Activated CD4-positive, alpha-beta T cell treated with anti-CD3 and anti-CD28 coated beads, Interleukin-2, amount 10 ng/mL, durations not matched to agents 7 days and 5 days (primary cell): ENCODE measurements at regions of chr14 and their contacts with region 1.

Region 1: GRCh38 chr14:64447876-64448670 is 17.2 kb upstream of the AKAP5 start:
- DNase-seq: no peak
- H3K4me3 Mint-ChIP-seq: no peak overlapping the region
- H3K27ac Mint-ChIP-seq: no peak overlapping the region
- H3K4me1 Mint-ChIP-seq: peaks cover 26% of the 10 kb centered on the region
- H3K27me3 Mint-ChIP-seq: no peaks in the 10 kb centered on the region

Region 2: GRCh38 chr14:64434528-64434927 is 13.5 kb before region 1 on chr14:
- CTCF ChIA-PET with region 1: interaction called, 14 read pairs
- POLR2A ChIA-PET with region 1: no interaction called
- DNase-seq: no peak
- H3K4me3 Mint-ChIP-seq: no peak overlapping the region
- H3K27ac Mint-ChIP-seq: no peak overlapping the region
- H3K4me1 Mint-ChIP-seq: peaks cover 19% of the 10 kb centered on the region
- H3K27me3 Mint-ChIP-seq: no peaks in the 10 kb centered on the region

Region 3: DNA sequence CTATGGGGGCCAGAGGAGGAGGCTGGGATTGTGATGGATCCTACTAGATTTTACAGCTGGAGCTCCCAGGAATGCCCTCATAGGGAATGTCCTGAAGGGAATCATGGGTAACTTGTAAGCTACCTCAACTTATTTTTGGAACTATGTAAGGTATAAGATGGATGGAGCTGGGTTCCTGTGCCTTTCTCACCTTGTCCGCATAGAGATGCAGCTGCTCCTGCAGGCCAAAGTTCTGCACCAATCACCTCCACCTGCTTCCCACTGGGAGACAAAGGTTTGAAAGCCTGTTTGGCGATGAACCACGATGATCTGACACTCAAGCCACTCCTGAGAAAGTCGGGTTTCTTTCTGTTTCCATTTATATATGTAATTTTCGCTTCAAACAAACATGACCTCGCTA is 16.6 kb after region 1 on chr14:
- CTCF ChIA-PET with region 1: interaction called, 10 read pairs
- POLR2A ChIA-PET with region 1: no interaction called
- DNase-seq: no peak
- H3K4me3 Mint-ChIP-seq: peak overlapping the region; percentile 80
- H3K27ac Mint-ChIP-seq: peak overlapping the region; percentile 80
- H3K4me1 Mint-ChIP-seq: peaks cover 33% of the 10 kb centered on the region
- H3K27me3 Mint-ChIP-seq: no peaks in the 10 kb centered on the region

Region 4: GRCh38 chr14:64478634-64479250 is 30.7 kb after region 1 on chr14:
- CTCF ChIA-PET with region 1: no interaction called
- POLR2A ChIA-PET with region 1: no interaction called
- DNase-seq: peak; percentile 18
- H3K4me3 Mint-ChIP-seq: no peak overlapping the region
- H3K27ac Mint-ChIP-seq: no peak overlapping the region
- H3K4me1 Mint-ChIP-seq: peaks cover 8% of the 10 kb centered on the region
- H3K27me3 Mint-ChIP-seq: no peaks in the 10 kb centered on the region